ENCODE measurements at regions of chr11 and their contacts with region 1.

Region 1: GRCh38 chr11:119236490-119236889 is 30.4 kb downstream of the CBL start:
- DNase-seq: no peak
- H3K4me3 Mint-ChIP-seq: no peak overlapping the region
- H3K27ac Mint-ChIP-seq: peak overlapping the region; percentile 44
- H3K4me1 Mint-ChIP-seq: peaks cover 49% of the 10 kb centered on the region
- H3K27me3 Mint-ChIP-seq: no peaks in the 10 kb centered on the region

Region 2: DNA sequence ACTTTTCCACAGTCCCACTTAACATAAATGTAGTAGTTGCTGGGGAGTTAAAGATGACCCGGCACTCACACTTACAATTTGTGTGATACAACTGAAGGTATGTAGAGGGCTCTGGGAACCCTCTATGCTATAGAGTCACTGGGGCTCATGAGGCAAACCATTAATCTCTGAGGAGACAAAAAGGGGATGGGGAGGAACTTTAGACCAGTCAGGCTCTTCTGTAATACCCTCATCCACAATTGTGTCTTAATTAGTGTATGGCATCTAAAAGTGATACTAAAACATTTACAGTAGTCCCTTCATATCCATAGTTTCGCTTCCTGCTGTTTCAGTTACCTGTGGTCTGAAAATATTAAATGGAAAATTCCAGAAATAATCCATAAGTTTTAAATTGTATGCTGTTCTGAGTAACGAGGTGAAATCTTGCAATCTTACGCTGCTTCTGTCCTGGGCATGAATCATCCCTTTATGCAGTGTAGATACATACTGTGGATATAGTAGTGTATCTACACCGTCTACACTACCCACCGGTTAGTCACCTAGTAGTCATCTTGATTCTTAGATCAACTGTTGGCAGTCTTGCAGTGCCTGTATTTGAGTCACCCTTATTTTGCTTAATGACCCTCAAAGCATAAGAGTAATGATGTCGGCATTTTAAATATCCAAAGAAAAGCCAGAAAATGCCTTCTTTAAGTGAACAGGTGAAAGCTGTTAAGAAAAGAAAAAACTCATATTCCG is 18.2 kb before region 1 on chr11:
- CTCF ChIA-PET with region 1: no interaction called
- POLR2A ChIA-PET with region 1: no interaction called
- intact Hi-C with region 1: loop called (anchors 1 kb)
- DNase-seq: peak; percentile 22
- H3K4me3 Mint-ChIP-seq: no peak overlapping the region
- H3K27ac Mint-ChIP-seq: peak overlapping the region; percentile 23
- H3K4me1 Mint-ChIP-seq: peaks cover 42% of the 10 kb centered on the region
- H3K27me3 Mint-ChIP-seq: no peaks in the 10 kb centered on the region

Region 3: DNA sequence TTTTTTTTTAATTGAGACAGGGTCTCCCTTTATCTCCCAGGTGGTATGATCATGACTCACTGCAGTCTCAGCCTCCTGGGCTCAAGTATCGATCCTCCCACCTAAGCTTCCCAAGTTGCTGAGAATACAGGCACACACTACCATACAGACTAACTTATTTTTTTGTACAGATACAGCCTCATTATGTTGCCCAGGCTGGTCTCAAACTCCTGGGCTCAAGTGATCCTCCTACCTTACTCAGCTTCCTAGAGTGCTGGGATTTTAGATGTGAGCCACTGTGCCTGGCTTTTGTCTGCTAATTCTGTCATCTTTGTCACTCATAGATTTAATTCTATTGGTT is 13.2 kb after region 1 on chr11:
- CTCF ChIA-PET with region 1: no interaction called
- POLR2A ChIA-PET with region 1: interaction called, 4 read pairs
- intact Hi-C with region 1: loop called (anchors 1 kb)
- DNase-seq: no peak
- H3K4me3 Mint-ChIP-seq: no peak overlapping the region
- H3K27ac Mint-ChIP-seq: no peak overlapping the region
- H3K4me1 Mint-ChIP-seq: peaks cover 53% of the 10 kb centered on the region
- H3K27me3 Mint-ChIP-seq: no peaks in the 10 kb centered on the region